ENCODE measurements at regions of chr10 and their contacts with region 1.

Region 1: DNA sequence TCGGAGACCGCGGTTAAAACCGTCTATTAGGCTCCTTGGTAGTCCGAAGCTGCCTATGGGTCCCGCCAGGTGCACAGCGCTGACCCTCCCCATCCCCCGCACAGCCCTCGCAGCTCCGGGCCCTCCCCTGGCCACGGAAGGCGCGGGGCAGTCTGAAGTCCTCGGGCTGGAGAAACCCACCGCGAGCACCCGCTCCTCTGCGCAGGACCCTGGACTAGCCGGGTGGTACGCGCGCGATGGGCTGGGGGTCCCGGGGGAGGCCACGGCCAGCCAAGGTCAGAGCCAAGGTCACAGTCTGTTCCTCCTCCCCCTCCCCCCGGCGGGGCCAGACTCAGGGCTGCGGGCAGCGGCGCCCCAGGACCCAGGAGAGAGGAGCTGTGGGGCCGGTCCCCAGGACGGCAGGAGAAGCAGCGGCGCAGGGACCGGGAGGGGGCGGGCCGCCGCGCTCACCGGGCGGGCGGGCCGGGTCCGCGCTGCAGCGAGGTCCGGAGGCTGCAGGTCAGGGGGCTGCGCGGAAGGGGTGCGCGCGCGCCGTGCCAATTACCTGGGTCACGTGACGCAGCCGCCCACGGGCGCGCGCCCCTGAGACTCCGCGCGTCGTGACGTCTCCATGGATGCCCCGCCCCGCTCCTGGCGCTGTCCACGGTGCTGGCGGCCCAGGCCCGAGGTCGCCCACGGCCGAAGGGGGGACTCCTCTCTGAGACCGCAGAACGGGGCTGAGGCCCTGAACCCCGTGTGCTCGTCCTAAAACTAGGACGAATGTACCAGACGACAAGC is at the start of gene OGDHL:
- DNase-seq: peak; percentile 78
- ATAC-seq: peak; percentile 66
- H3K4me3 Mint-ChIP-seq: peak within 1 kb of the TSS; percentile 27
- H3K27ac Mint-ChIP-seq: no peak within 1 kb of the TSS
- H3K4me1 Mint-ChIP-seq: peaks cover 4% of the 10 kb centered on the region
- H3K27me3 Mint-ChIP-seq: peaks cover 36% of the 10 kb centered on the region
- total RNA-seq, gene OGDHL: 0.44 to 0.73 TPM

Region 2: GRCh38 chr10:49398000-49398861 is 363.7 kb before region 1 on chr10:
- CTCF ChIA-PET with region 1: no interaction called
- POLR2A ChIA-PET with region 1: no interaction called
- intact Hi-C with region 1: loop called in 1 of 2 experiments (anchors 5 kb)
- DNase-seq: peak; percentile 78
- ATAC-seq: peak; percentile 88
- H3K4me3 Mint-ChIP-seq: no peak overlapping the region
- H3K27ac Mint-ChIP-seq: no peak overlapping the region
- H3K4me1 Mint-ChIP-seq: peaks cover 8% of the 10 kb centered on the region
- H3K27me3 Mint-ChIP-seq: peaks cover 60% of the 10 kb centered on the region